ENCODE measurements at regions of chr11 and their contacts with region 1.

Region 1: GRCh38 chr11:130677486-130678153 is 229.2 kb downstream of the ADAMTS15 start:
- DNase-seq: no peak
- ATAC-seq: peak; percentile 69

Region 2: DNA sequence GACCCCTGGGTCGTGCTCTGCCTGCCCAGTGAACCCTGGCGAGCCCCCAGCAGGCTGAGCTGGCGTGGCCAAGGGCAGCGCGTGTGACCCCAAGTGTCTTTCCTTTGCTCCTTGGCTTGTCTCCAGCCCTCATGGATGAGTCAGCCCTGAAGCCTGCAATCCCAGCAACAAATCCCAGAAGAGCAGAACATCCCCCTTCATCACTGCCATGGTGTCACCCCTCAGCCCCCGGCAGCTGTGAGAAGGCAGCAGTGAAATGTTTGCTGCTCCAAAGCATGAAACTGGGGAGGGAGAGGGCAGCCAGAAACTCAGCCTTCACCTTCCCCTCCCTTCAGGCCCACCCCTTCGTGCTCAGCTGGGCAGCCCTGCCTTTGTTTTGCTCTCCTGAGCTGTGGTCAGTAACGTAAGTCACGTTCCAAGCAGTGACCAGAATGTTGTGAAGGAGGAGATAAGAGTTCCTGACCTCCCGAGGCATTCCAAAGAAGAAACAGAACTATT is 199.4 kb before region 1 on chr11:
- intact Hi-C with region 1: loop called (anchors 1 kb)
- DNase-seq: no peak
- ATAC-seq: peak; percentile 70

Region 3: GRCh38 chr11:130653838-130654636 is 23.6 kb before region 1 on chr11:
- intact Hi-C with region 1: loop called (anchors 1 kb)
- DNase-seq: peak; percentile 90
- ATAC-seq: peak; percentile 95

Region 4: DNA sequence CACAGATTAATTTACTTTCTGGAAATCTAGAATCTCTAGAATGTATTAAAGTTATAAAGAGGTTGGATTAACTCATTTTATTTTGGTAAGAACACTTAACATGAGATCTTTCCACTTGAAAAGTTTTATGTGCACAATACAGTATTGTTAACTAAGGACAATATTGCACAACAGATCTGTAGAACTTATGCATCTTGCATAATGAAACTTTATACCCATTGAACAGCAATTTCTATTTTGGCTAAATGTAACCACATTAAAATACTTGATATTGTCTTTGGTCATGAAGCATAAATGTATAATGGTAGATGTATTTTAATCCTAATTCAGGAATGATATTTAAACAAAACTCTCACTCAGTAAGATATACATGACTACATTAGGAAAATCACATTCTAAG is 34.9 kb after region 1 on chr11:
- intact Hi-C with region 1: no loop called
- DNase-seq: no peak
- ATAC-seq: no peak

Region 5: DNA sequence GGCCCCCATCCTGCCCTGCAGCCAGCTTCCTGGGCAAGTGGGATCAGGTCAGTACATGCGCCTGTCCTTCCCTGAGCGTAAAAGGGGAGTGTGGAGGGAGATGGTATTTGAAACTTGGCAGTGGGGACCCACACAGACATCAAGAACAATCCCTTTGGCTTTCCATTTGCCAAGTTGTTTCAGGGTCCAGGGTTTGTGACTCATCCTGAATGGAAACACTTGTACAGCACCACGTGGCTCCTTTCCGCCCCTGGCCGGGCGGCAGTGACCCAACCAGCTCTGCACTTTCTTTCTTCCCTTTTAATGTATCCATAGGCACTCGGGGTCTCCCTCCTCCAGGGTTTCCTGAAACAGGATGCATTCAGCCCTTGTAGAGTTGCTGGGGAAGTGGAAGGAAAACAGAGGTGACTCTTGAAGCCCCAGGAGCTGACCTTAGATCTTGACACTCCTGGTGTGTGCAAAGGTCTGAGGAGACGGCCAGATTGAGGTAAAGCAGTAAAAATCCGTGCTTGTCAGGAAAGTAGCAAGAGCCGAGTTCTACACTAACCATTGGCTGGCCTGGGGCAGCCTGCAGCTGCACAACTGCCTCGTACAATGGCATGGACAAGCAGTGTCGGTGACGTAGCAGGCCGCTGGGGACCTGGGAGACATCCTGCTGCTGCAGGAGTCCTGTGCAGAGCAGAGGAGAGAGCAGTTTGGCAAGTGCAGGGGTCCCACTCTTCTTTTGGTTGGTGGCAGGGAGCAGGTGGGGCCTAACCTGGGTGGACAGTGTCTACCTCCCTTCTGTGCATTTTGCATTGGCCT is 48.8 kb after region 1 on chr11:
- intact Hi-C with region 1: loop called (anchors 5 kb)
- DNase-seq: no peak
- ATAC-seq: peak; percentile 90

Region 6: DNA sequence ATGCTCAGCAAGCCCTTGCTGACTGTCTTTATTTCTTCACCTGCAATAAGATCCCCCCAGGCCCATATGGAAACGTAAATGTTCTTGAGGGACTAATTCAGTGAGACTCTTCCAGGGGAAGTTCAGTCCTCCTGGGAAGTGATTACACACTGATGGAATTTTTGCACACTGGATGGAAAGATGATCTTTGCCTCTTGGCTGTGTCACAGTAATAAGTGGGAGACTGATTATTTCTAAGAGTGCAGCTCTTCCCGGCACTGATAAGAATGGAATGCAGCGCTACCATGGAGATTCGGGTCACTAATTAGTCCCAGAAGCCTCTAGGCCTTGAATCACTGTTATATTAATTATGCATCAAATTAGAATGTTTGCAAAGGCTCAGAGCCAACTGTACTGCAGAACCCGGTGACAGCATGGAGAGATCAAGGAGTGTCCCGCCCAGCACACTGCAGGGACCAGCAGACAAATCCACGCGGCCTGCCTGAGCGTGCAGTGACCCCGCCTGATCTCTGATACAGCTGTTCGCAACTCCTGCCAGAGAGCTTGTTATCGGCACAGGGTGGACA is 60.3 kb after region 1 on chr11:
- intact Hi-C with region 1: loop called (anchors 5 kb)
- DNase-seq: peak; percentile 82
- ATAC-seq: peak; percentile 97